BJ (cell line): ENCODE measurements at regions of chr19 and their contacts with region 1.

Region 1: DNA sequence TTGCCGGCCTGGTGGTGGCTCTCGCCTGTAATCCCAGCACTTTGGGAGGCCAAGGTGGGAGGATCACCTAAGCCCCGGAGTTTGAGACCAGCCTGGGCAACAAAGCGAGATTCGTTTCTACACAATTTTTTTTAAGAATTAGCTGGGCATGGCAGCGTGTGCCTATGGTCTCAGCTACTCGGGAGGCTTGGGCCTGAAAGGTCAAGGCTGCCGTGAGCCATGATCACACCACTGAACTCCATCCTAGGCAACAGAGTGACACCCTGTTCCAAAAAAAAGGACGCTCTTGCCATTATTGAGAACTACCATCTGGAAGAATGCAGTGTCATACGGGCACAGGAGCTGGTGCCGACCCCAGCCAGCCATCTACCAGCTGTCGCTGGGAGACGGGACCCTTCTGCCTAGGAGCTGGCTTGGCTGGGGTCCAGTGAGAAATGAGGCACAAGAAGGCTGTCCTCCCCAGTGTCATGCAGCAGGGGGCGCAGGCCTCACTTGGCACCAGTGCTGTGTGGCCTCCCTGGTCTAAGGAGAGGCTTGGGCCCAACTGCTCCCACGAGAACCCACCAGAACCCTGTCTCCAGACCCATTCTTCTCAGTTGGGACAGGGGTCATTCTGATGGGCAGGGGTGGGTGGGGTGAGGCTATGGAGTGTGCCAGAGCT is 12.2 kb upstream of the RELB start:
- DNase-seq: no peak
- H3K4me3 ChIP-seq: no peak overlapping the region
- H3K27me3 ChIP-seq: no peaks in the 10 kb centered on the region
- CTCF ChIP-seq: peak; percentile 80

Region 2: DNA sequence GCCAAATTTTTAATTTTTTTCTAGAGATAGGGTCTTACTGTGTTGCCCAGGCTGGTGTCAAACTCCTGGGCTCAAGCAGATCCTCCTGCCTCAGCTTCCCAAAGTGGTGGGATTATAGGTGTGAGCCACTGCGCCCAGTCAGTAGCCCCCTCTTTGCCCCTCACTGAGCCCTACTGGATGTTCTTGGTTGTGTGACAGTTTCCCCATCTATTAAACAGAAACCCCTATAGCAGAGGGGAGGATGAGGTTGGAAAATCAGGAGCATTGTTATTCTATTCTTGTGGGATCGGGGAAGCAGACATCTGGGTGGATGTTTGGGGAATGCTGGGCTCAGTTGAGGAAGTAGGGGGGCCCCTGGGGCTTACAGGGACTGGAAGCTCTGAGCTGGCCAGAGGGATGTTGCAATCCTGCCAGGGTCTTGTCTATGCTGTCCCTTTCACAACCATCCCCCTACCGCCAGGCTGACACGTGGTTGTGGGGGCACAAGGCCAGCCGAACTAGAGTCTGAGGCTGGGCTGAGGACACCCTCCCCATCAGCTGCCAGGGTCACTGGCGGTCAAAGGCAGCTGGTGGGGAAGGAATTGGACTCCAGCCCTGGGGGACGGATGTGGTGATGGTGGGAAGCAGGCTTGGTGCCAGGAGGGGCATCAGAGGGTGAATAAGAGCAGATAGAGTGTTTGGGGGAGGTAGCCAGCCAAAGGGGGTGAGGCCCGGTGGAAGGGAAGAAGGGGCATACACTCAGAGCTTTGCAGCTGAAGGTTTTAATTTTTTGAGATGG is 63.7 kb before region 1 on chr19:
- CTCF ChIA-PET with region 1: no interaction called
- POLR2A ChIA-PET with region 1: no interaction called
- DNase-seq: no peak
- H3K4me3 ChIP-seq: no peak overlapping the region
- H3K27me3 ChIP-seq: no peaks in the 10 kb centered on the region; the same call in 1 of the 2 replicates
- CTCF ChIP-seq: no peak

Region 3: GRCh38 chr19:44972802-44973201 is 16.2 kb before region 1 on chr19:
- CTCF ChIA-PET with region 1: interaction called, 14 read pairs
- POLR2A ChIA-PET with region 1: no interaction called
- DNase-seq: no peak
- H3K4me3 ChIP-seq: no peak overlapping the region
- H3K27me3 ChIP-seq: no peaks in the 10 kb centered on the region
- CTCF ChIP-seq: no peak

Region 4: GRCh38 chr19:45022010-45022409 is 33.0 kb after region 1 on chr19:
- CTCF ChIA-PET with region 1: no interaction called
- POLR2A ChIA-PET with region 1: no interaction called
- DNase-seq: no peak
- H3K4me3 ChIP-seq: no peak overlapping the region
- H3K27me3 ChIP-seq: no peaks in the 10 kb centered on the region
- CTCF ChIP-seq: no peak